Aorta (tissue), 5 donors: ENCODE measurements at regions of chr3 and their contacts with region 1.

Region 1: GRCh38 chr3:179653096-179653797 is 407 bp downstream of the USP13 start:
- DNase-seq: peak; percentile 84 to 89
- ATAC-seq: peak; percentile 88
- H3K4me3 ChIP-seq: peak overlapping the region; percentile 79 to 96
- H3K27ac ChIP-seq: peak overlapping the region; percentile 83 to 85
- H3K4me1 ChIP-seq: peaks cover 0 to 2% of the 10 kb centered on the region in 2 donors
- H3K27me3 ChIP-seq: no peaks in the 10 kb centered on the region

Region 2: GRCh38 chr3:178583963-178584575 is 1069.2 kb before region 1 on chr3:
- intact Hi-C with region 1: no loop called
- DNase-seq: no peak
- ATAC-seq: peak; percentile 19
- H3K4me3 ChIP-seq: no peak overlapping the region
- H3K27ac ChIP-seq: no peak overlapping the region
- H3K4me1 ChIP-seq: no peaks in the 10 kb centered on the region
- H3K27me3 ChIP-seq: no peaks in the 10 kb centered on the region

Region 3: GRCh38 chr3:179347345-179348194 is 305.7 kb before region 1 on chr3 and contains the start of gene MFN1:
- intact Hi-C with region 1: no loop called
- DNase-seq: peak; percentile 97
- ATAC-seq: peak; percentile 99
- H3K4me3 ChIP-seq: peak within 1 kb of the TSS; percentile 89 to 94
- H3K27ac ChIP-seq: peak within 1 kb of the TSS; percentile 58 to 78
- H3K4me1 ChIP-seq: no peaks in the 10 kb centered on the region
- H3K27me3 ChIP-seq: no peaks in the 10 kb centered on the region
- total RNA-seq, gene MFN1: 56.1 to 61.3 TPM

Region 4: GRCh38 chr3:179604321-179605078 is 48.7 kb before region 1 on chr3 and contains the starts of genes MRPL47 and NDUFB5:
- intact Hi-C with region 1: loop called in 1 of 2 experiments (anchors 5 kb)
- DNase-seq: peak; percentile 96 to 97
- ATAC-seq: peak; percentile 100
- H3K4me3 ChIP-seq: peak within 1 kb of the TSS; percentile 91 to 93
- H3K27ac ChIP-seq: peak within 1 kb of the TSS; percentile 84 to 88
- H3K4me1 ChIP-seq: no peaks in the 10 kb centered on the region
- H3K27me3 ChIP-seq: no peaks in the 10 kb centered on the region
- total RNA-seq, gene MRPL47: 19.7 to 23.7 TPM
- total RNA-seq, gene NDUFB5: 32.5 to 52.6 TPM